A549 (cell line): ENCODE measurements at regions of chr10 and their contacts with region 1.

Region 1: GRCh38 chr10:111076191-111076681 is 593 bp upstream of the ADRA2A start:
- DNase-seq: peak; percentile 58 to 71
- ATAC-seq: peak; percentile 86 to 94
- H3K4me3 ChIP-seq: peak overlapping the region; percentile 61
- H3K27ac ChIP-seq: peak overlapping the region in 1 of 2 experiments; percentile 20; a peak in 2 of 6 replicates
- H3K4me1 ChIP-seq: 0 out of 3 replicates have a peak, but pooled peaks cover 4% of the 10 kb centered on the region
- CTCF ChIP-seq: peak; percentile 78
- EP300 ChIP-seq: no peak
- POLR2A ChIP-seq: no peak
- RAD21 ChIP-seq: peak; percentile 73 to 89

Region 2: GRCh38 chr10:110779489-110779888 is 296.7 kb before region 1 on chr10:
- CTCF ChIA-PET with region 1: no interaction called
- POLR2A ChIA-PET with region 1: no interaction called
- DNase-seq: no peak
- ATAC-seq: no peak
- H3K4me3 ChIP-seq: no peak overlapping the region
- H3K27ac ChIP-seq: no peak overlapping the region
- H3K4me1 ChIP-seq: peaks cover 13% of the 10 kb centered on the region
- CTCF ChIP-seq: no peak
- EP300 ChIP-seq: no peak
- POLR2A ChIP-seq: no peak
- RAD21 ChIP-seq: no peak

Region 3: DNA sequence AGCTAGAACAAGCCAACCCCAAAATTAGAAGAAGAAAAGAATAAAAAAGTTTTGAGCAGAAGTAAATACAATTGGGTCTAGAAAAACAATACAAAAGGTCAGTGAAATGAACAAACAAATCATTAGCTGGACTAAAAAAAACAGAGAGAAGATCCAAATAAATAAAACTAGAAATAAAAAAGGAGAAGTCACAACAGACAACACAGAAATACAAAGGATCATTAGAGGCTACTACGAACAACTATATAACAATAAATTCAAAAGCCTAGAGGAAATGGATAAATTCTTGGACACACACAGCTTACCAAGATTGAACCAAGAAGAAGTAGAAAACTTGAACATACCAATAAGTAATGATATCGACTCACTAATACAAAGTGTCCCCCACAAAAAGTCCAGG is 12.8 kb before region 1 on chr10:
- CTCF ChIA-PET with region 1: interaction called, 26 read pairs
- POLR2A ChIA-PET with region 1: no interaction called
- DNase-seq: no peak
- ATAC-seq: no peak
- H3K4me3 ChIP-seq: no peak overlapping the region
- H3K27ac ChIP-seq: no peak overlapping the region
- H3K4me1 ChIP-seq: no peaks in the 10 kb centered on the region
- CTCF ChIP-seq: no peak
- EP300 ChIP-seq: no peak
- POLR2A ChIP-seq: no peak
- RAD21 ChIP-seq: no peak

Region 4: GRCh38 chr10:111093741-111094380 is 17.6 kb after region 1 on chr10:
- CTCF ChIA-PET with region 1: interaction called, 10 read pairs
- POLR2A ChIA-PET with region 1: no interaction called
- DNase-seq: no peak
- ATAC-seq: no peak
- H3K4me3 ChIP-seq: no peak overlapping the region
- H3K27ac ChIP-seq: no peak overlapping the region
- H3K4me1 ChIP-seq: no peaks in the 10 kb centered on the region
- CTCF ChIP-seq: no peak
- EP300 ChIP-seq: no peak
- POLR2A ChIP-seq: no peak
- RAD21 ChIP-seq: no peak